GM18951 (cell line): ENCODE measurements at regions of chr12 and their contacts with region 1.

Region 1: GRCh38 chr12:108907476-108908351 is 27.8 kb downstream of the DAO start:
- POLR2A ChIP-seq: no peak

Region 2: GRCh38 chr12:109393437-109394345 is 486.0 kb after region 1 on chr12:
- in situ Hi-C with region 1: loop called (anchors 25 kb)
- POLR2A ChIP-seq: no peak